Activated B cell treated with CpG ODN at 0.5 μM for 24 hours (primary cell): ENCODE measurements at regions of chr5 and their contacts with region 1.

Region 1: DNA sequence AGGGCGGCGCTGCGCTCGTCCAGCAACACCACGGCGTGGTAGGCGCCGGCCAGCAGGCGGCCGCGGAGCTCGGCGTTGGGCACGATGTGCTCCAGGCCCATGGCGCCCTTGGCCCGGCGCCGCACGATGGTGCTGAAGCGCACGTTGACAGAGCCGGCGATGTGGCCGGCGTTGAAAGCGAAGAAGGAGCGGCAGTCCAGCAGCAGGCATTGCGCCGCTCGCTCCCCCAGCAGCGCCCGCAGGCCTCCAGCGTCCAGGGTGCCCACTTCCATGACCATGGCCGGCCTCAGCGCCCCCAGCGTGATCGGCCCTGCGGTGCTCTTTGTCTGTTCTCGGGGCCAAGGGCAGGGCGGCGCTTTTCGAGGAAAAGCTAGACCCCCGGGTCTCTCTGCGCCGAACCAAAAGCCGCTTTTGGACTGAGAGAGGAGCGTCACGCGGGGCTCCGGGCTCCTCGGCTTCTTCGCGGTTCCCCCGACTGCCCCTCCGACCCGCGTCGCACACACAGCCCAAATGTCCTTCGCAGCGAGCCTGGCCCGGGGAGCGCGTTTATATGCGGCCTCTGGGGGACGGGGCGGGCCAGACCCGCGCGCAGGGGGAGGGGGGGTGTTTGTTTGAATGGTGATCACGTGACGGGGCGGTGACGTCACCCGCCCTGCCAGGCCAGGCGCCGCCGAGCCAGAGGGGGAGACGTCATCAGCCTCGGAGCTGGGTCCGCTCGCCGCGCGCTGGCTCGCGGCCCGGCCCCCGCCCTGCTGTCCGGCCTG is at the start of gene DUSP1:
- DNase-seq: peak; percentile 96
- ATAC-seq: peak; percentile 53
- H3K4me3 Mint-ChIP-seq: peak within 1 kb of the TSS; percentile 92
- H3K27ac Mint-ChIP-seq: peak within 1 kb of the TSS; percentile 99
- H3K4me1 Mint-ChIP-seq: peaks cover 73% of the 10 kb centered on the region
- H3K27me3 Mint-ChIP-seq: no peaks in the 10 kb centered on the region
- CTCF ChIP-seq: no peak
- total RNA-seq, gene DUSP1: 15.0 and 21.2 TPM in 2 replicates

Region 2: GRCh38 chr5:172740428-172741201 is 30.2 kb before region 1 on chr5:
- CTCF ChIA-PET with region 1: no interaction called
- POLR2A ChIA-PET with region 1: interaction called, 17 read pairs
- intact Hi-C with region 1: no loop called
- DNase-seq: no peak
- ATAC-seq: no peak
- H3K4me3 Mint-ChIP-seq: no peak overlapping the region
- H3K27ac Mint-ChIP-seq: peak overlapping the region; percentile 46
- H3K4me1 Mint-ChIP-seq: peaks cover 33% of the 10 kb centered on the region
- H3K27me3 Mint-ChIP-seq: no peaks in the 10 kb centered on the region
- CTCF ChIP-seq: no peak

Region 3: DNA sequence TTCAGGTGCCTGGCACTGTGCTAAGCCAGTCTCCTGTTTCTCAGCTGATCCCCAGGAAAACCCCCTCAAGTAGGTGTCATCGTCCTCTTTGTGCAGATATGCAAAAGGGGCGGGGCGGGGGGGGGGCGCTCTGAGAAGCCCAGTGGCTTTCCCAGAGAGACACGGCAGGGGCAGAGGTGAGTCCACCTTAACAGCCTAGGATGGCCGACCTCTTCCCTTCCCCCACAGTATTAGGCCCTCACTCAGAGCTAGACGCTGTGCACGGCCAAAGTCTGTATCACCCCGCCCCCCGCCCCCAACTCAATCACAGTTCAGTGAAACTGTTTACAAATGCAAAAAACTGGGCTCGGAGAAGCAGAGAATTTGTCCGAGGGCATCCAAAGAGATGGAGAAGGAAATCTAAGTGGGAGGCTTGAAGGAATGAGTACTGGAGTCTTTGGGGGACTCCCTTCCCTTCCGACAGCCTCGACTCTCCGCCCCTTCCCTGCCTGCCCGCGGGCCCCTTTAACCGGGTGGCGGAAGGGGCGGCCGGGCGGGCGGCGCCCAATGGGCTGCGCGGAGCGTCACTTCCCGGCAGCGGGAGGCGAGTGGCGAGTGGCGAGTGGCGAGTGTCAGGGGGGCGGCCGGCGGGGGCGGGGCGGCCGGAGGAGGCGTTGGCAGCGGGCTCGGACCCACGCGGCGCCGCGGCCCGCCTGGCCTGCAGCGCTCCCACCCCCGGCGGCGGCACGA is 63.0 kb after region 1 on chr5 and contains the start of gene ERGIC1:
- CTCF ChIA-PET with region 1: interaction called, 6 read pairs
- POLR2A ChIA-PET with region 1: interaction called, 128 read pairs
- intact Hi-C with region 1: loop called (anchors 1 kb)
- DNase-seq: peak; percentile 79
- ATAC-seq: peak; percentile 78
- H3K4me3 Mint-ChIP-seq: peak within 1 kb of the TSS; percentile 89
- H3K27ac Mint-ChIP-seq: peak within 1 kb of the TSS; percentile 92
- H3K4me1 Mint-ChIP-seq: peaks cover 48% of the 10 kb centered on the region
- H3K27me3 Mint-ChIP-seq: no peaks in the 10 kb centered on the region
- CTCF ChIP-seq: no peak
- total RNA-seq, gene ERGIC1: 69.6 and 72.5 TPM in 2 replicates

Region 4: DNA sequence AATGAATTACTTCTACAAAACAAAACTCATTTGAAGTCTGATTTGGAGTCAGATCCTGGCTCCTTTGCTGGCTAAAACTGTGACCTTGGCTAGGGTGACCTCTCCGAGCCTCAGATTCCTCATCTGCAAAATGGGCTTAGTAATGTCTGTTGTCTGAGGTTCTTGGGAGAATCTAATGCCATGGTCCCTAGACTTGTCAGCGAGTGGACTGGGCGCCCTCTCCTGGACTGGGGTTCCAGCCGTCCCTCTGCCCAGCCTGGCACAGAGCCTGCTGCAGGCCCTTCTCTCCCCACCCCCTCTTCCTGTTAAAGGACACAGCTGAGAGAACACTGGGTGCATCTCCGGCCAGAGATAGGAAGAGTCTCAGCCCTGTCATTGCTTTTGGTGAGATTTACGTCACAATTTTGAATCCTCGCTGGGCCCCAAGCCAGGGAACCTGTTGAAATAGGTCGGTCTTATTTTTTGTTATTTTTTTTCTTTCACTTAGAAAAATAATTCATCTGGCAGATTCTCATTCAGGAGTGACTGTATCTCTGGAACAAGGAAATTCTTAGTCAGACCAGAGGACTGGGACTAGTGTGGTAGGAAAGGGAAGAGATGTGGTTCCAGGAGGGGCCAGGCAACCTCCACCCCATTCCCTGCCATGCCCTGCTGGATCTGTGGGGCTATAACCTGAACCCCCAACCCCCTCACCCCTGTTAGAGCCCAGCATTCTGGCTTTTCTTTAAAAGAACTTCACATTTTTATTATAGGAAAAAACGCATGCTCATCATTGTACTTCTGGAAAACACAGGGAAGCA is 140.2 kb after region 1 on chr5:
- CTCF ChIA-PET with region 1: no interaction called
- POLR2A ChIA-PET with region 1: interaction called, 17 read pairs
- intact Hi-C with region 1: loop called (anchors 1 kb)
- DNase-seq: peak; percentile 23
- ATAC-seq: peak; percentile 76
- H3K4me3 Mint-ChIP-seq: peak overlapping the region; percentile 25
- H3K27ac Mint-ChIP-seq: peak overlapping the region; percentile 86
- H3K4me1 Mint-ChIP-seq: peaks cover 25% of the 10 kb centered on the region
- H3K27me3 Mint-ChIP-seq: no peaks in the 10 kb centered on the region
- CTCF ChIP-seq: no peak

Region 5: DNA sequence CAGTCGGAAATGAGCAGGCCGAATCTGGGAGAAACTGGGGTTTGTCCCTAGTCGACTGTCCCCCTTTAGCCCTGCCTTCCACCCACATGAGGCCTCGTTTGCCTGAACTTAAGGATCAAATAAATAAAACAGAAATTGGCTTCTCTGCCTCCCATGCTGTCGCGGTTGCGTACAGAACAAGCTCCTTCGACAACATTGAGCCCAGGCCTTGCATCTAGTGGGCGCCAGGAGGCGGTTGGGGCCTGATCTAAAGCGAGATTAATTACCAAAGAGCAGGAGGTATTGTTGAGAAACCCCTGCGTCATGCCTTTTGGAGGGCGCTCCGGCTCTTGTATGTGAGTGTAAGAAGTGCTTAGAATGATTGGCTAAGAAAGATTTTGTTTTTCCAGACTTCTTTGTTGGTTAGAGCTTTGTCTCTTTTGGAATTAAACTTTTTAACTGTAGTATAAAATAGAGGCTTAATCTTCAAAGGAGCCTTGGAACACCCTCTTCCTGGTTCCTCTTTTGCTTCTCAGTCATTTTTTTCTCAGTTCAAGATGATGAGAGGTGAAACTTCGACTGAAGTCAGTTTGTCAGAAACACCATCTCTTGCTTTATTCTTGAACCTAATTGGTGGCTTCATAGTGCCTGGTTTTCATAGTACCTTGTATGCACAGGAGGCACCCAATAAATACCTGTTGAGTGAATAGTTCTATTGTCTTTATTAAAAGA is 213.5 kb after region 1 on chr5:
- CTCF ChIA-PET with region 1: no interaction called
- POLR2A ChIA-PET with region 1: interaction called, 12 read pairs
- intact Hi-C with region 1: no loop called
- DNase-seq: peak; percentile 48
- ATAC-seq: peak; percentile 67
- H3K4me3 Mint-ChIP-seq: peak overlapping the region; percentile 98
- H3K27ac Mint-ChIP-seq: peak overlapping the region; percentile 96
- H3K4me1 Mint-ChIP-seq: peaks cover 44% of the 10 kb centered on the region
- H3K27me3 Mint-ChIP-seq: no peaks in the 10 kb centered on the region
- CTCF ChIP-seq: no peak